CD8-positive, alpha-beta T cell (primary cell): ENCODE measurements at regions of chr2 and their contacts with region 1.

Region 1: GRCh38 chr2:200888704-200889625 is at the starts of genes NIF3L1 and PPIL3:
- DNase-seq: peak; percentile 92 to 99 (median 97)
- ATAC-seq: peak; percentile 70
- H3K4me3 ChIP-seq: peak within 1 kb of the TSS; percentile 77 to 78
- H3K4me3 Mint-ChIP-seq: peak within 1 kb of the TSS; percentile 94
- H3K27ac ChIP-seq: peak within 1 kb of the TSS; percentile 96
- H3K27ac Mint-ChIP-seq: peak within 1 kb of the TSS; percentile 100
- H3K4me1 ChIP-seq: peaks cover 21% of the 10 kb centered on the region
- H3K4me1 Mint-ChIP-seq: peaks cover 55% of the 10 kb centered on the region
- H3K27me3 ChIP-seq: no peaks in the 10 kb centered on the region
- H3K27me3 Mint-ChIP-seq: no peaks in the 10 kb centered on the region
- CTCF ChIP-seq: no peak
- total RNA-seq, gene NIF3L1: 3.8 to 4.9 TPM
- total RNA-seq, gene PPIL3: 48.6 to 51.0 TPM

Region 2: DNA sequence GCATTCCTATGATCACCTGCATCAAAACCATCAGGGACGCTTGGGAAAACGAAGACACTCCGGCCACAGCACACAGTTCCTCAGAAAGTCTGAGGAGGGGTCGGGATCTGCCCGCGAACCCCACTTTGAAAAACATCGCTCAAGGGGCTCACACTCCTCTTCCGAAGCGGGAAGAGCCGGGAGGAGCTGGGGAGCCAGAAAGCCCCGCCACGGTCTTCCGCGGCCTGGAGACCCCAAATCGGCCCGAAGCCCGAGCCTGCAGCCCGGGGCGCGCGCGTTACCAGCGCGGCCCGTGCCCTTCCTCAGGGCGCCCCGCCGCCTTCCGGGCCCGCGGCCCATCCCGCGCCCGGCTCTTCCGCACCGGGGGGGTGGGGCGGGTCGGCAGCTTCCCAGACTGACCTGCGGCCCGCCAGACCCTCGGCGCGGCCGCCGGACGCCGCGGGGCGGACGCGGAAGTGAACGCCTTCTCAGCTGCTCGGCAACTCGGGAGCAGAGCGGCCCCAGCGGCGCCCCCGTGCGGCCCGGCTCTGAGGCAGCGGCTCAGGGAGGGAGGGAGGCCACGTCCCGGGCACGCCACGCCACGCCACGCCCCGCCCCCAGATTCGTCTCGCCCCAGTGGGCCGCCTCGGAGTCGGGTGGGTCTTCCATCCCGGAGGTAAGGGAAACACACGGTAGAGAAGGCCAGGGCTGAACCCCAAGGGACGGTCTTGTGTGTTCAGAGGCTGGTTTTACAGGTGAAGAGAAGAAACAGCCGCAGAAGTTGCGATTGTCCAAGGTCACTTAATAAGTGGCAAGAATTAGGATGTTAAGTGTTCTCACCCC is 379.1 kb before region 1 on chr2 and contains the start of gene KCTD18:
- CTCF ChIA-PET with region 1: no interaction called
- POLR2A ChIA-PET with region 1: no interaction called
- intact Hi-C with region 1: loop called in 1 of 2 experiments (anchors 2 kb)
- DNase-seq: peak; percentile 83 to 96 (median 93)
- ATAC-seq: peak; percentile 99
- H3K4me3 ChIP-seq: peak within 1 kb of the TSS; percentile 78 to 79
- H3K4me3 Mint-ChIP-seq: peak within 1 kb of the TSS; percentile 91
- H3K27ac ChIP-seq: peak within 1 kb of the TSS; percentile 61 to 71
- H3K27ac Mint-ChIP-seq: peak within 1 kb of the TSS; percentile 93
- H3K4me1 ChIP-seq: peaks cover 25% of the 10 kb centered on the region
- H3K4me1 Mint-ChIP-seq: peaks cover 42% of the 10 kb centered on the region
- H3K27me3 ChIP-seq: peaks cover 0 to 7% of the 10 kb centered on the region in 2 experiments
- H3K27me3 Mint-ChIP-seq: no peaks in the 10 kb centered on the region
- CTCF ChIP-seq: peak; percentile 75
- total RNA-seq, gene KCTD18: 17.9 to 20.4 TPM

Region 3: DNA sequence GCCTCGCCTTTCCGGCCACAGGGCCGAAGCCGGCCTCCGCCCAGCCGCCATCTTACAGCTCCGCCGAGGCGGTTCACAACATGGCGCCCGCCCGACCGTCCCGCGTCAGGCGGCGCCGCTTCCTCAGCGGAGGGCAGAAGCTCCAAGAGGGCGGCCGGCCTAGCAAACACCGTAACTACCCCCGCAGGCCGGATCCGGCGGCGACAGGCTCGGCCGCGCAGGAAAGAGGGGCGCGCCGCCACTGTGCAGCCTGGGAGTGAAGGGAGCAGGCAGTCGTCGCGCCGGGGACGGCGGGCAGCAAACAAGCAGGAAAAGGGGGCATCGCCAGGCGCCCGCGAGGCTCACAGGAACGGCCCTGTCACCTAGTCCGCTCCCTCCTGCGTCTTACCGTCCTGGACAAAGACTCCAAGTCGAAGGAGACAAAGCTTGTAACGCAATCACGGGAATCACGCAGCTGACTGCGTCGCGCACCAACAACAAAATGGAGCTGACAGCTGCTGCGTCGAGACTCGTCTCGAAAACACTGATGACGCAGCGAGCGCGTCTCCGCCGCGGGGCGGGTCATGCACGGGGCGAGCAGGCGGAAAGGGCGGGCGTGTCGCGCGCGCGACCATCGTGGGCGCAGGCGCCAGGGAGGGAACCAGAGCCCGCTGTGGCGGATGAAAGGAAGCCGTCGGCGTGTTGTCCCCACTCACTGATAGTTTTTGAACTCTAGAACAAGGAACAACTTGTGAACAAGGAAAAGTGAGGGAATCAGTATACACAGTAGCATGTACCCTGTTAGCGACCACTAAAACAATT is 24.6 kb before region 1 on chr2 and contains the start of gene CLK1:
- CTCF ChIA-PET with region 1: interaction called, 10 read pairs
- POLR2A ChIA-PET with region 1: interaction called, 123 read pairs
- intact Hi-C with region 1: loop called (anchors 1 kb)
- DNase-seq: peak; percentile 94 to 99 (median 98)
- ATAC-seq: peak; percentile 78
- H3K4me3 ChIP-seq: peak within 1 kb of the TSS; percentile 84 to 98
- H3K4me3 Mint-ChIP-seq: peak within 1 kb of the TSS; percentile 96
- H3K27ac ChIP-seq: peak within 1 kb of the TSS; percentile 98 to 100
- H3K27ac Mint-ChIP-seq: peak within 1 kb of the TSS; percentile 100
- H3K4me1 ChIP-seq: peaks cover 29% of the 10 kb centered on the region
- H3K4me1 Mint-ChIP-seq: peaks cover 43% of the 10 kb centered on the region
- H3K27me3 ChIP-seq: no peaks in the 10 kb centered on the region
- H3K27me3 Mint-ChIP-seq: no peaks in the 10 kb centered on the region
- CTCF ChIP-seq: no peak
- total RNA-seq, gene CLK1: 1,353 to 1,404 TPM

Region 4: DNA sequence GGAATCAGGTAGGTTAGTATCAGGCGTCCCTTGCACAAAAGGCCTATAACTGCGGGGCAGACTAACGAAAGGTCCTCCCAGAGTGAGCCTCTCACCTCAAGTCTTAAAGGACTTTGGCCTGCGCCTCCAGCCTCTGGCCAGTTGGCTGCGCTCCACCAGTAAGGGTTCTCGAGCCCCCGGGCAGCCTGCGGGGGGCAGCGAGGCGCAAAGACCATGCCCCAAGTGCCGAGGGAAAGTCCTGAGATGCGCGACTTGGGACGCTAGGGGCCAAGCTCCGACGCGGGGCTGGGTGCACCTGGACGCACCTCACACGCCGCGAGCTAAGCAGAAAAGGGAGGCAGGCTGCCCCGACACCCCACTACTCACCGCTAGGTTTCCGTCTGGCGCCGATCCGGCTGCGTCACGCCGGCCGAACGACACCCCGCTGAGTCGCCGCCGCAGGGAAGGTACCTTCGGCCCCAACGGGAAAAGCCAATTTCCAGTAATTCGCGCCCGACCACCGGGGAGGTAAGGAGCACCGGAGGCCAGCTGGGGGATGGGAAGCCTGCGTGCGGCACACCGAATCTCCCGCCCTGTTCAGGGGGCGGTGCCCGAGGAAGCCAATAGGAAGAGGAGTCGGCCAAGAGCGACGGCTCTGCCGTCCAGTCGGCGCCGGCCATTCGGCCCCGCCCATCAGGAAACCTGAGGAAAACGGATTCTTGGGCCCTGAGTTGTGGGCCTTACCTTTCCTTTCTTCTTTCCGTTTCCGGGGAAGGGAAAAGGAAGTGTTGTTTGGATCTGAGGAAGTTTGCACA is 74.4 kb after region 1 on chr2 and contains the start of gene ORC2:
- CTCF ChIA-PET with region 1: interaction called, 5 read pairs
- POLR2A ChIA-PET with region 1: interaction called, 12 read pairs
- intact Hi-C with region 1: loop called in 1 of 2 experiments (anchors 2 kb)
- DNase-seq: peak; percentile 84 to 96 (median 93)
- ATAC-seq: peak; percentile 94
- H3K4me3 ChIP-seq: peak within 1 kb of the TSS; percentile 70 to 90
- H3K4me3 Mint-ChIP-seq: peak within 1 kb of the TSS; percentile 99
- H3K27ac ChIP-seq: peak within 1 kb of the TSS; percentile 76 to 90
- H3K27ac Mint-ChIP-seq: peak within 1 kb of the TSS; percentile 99
- H3K4me1 ChIP-seq: peaks cover 30% of the 10 kb centered on the region
- H3K4me1 Mint-ChIP-seq: peaks cover 57% of the 10 kb centered on the region
- H3K27me3 ChIP-seq: no peaks in the 10 kb centered on the region
- H3K27me3 Mint-ChIP-seq: no peaks in the 10 kb centered on the region
- CTCF ChIP-seq: peak; percentile 51
- total RNA-seq, gene ORC2: 17.7 to 21.3 TPM

Region 5: DNA sequence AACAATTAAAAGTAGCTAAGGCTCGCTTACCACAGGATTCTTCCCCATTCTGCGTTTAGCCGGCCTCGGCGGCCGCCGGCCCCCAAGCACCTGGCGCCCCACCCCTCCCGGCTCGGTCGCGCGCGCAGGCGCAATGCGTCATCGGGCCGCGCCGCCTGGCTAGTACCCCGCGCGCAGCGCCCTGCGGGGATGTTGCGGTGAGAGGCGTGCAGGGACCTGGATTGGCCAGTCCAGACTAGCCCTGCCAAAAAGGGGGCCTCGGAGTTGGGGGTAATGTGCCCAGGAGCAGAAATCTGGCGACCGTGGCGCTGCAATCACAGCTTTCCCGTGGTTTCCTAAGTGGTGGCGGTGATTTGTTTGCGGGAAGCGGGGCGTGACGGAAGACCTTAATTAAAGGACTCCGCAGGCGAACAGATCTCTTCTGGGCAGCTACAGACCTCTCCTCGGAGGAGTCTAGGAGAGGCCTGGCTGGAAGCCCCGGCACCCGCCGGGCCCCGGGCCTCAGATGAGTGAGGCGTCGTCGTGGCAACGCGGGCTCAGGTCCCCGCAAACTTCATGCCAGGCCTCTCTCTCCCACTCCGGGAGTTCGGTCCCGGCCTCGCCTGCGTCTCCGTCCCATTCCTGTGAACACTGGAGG is 753.7 kb after region 1 on chr2:
- CTCF ChIA-PET with region 1: no interaction called
- POLR2A ChIA-PET with region 1: interaction called, 3 read pairs
- intact Hi-C with region 1: loop called (anchors 2 to 5 kb)
- DNase-seq: peak; percentile 65 to 91 (median 83)
- ATAC-seq: peak; percentile 86
- H3K4me3 ChIP-seq: peak overlapping the region; percentile 98 to 99
- H3K4me3 Mint-ChIP-seq: peak overlapping the region; percentile 90
- H3K27ac ChIP-seq: peak overlapping the region; percentile 89 to 99
- H3K27ac Mint-ChIP-seq: peak overlapping the region; percentile 96
- H3K4me1 ChIP-seq: no peaks in the 10 kb centered on the region
- H3K4me1 Mint-ChIP-seq: peaks cover 14% of the 10 kb centered on the region
- H3K27me3 ChIP-seq: no peaks in the 10 kb centered on the region
- H3K27me3 Mint-ChIP-seq: no peaks in the 10 kb centered on the region
- CTCF ChIP-seq: no peak